A673 (cell line): ENCODE measurements at regions of chr5 and their contacts with region 1.

Region 1: GRCh38 chr5:133366438-133366837 is 245.9 kb downstream of the FSTL4 start:
- DNase-seq: no peak
- H3K4me3 ChIP-seq: no peak overlapping the region
- H3K27ac ChIP-seq: no peak overlapping the region
- H3K4me1 ChIP-seq: no peaks in the 10 kb centered on the region
- H3K27me3 ChIP-seq: no peaks in the 10 kb centered on the region
- CTCF ChIP-seq: no peak

Region 2: GRCh38 chr5:133396814-133397213 is 30.4 kb after region 1 on chr5:
- CTCF ChIA-PET with region 1: no interaction called
- POLR2A ChIA-PET with region 1: no interaction called
- intact Hi-C with region 1: loop called (anchors 1 kb)
- DNase-seq: peak; percentile 13
- H3K4me3 ChIP-seq: no peak overlapping the region
- H3K27ac ChIP-seq: no peak overlapping the region
- H3K4me1 ChIP-seq: peaks cover 7% of the 10 kb centered on the region
- H3K27me3 ChIP-seq: no peaks in the 10 kb centered on the region
- CTCF ChIP-seq: no peak

Region 3: DNA sequence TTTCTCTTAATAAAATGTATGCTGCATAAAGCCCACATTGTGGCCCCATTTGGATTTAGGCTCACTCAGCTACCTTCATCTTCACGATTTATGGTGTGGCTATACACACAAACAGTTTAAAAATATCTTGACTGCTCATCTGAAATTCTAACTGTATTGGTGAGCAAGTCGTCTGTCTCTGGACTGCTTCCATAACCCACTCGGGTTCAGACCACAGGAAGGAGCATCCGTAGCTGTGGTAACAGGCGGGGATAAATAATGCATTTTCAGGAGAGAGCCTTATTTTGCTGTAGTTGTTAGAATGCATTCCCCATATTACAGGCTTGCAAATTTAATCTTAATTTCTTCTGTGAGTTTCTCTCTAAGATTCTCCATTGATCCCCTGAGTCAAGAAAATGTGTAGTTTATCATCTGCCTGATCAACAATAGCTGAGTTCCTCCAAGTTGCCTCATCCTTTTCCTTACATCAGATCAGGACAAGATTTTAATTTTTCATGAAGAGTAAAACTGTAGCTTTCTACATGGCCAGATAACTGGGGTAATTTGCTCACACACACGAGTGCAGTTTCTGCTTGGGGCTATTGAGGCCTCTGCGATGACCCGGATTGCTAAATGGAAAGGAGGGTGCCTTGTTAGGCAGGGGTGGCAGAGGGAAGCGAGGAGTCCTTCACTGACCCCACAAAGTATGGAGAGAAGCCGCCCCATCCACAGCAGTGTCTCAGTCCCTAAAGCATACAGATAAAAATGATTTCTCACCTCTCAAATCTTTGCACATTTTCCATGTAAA is 112.0 kb after region 1 on chr5:
- CTCF ChIA-PET with region 1: no interaction called
- POLR2A ChIA-PET with region 1: no interaction called
- intact Hi-C with region 1: no loop called
- DNase-seq: no peak
- H3K4me3 ChIP-seq: no peak overlapping the region
- H3K27ac ChIP-seq: no peak overlapping the region
- H3K4me1 ChIP-seq: no peaks in the 10 kb centered on the region
- H3K27me3 ChIP-seq: no peaks in the 10 kb centered on the region
- CTCF ChIP-seq: no peak